Endothelial cell of umbilical vein (primary cell): ENCODE measurements at regions of chr6 and their contacts with region 1.

Region 1: DNA sequence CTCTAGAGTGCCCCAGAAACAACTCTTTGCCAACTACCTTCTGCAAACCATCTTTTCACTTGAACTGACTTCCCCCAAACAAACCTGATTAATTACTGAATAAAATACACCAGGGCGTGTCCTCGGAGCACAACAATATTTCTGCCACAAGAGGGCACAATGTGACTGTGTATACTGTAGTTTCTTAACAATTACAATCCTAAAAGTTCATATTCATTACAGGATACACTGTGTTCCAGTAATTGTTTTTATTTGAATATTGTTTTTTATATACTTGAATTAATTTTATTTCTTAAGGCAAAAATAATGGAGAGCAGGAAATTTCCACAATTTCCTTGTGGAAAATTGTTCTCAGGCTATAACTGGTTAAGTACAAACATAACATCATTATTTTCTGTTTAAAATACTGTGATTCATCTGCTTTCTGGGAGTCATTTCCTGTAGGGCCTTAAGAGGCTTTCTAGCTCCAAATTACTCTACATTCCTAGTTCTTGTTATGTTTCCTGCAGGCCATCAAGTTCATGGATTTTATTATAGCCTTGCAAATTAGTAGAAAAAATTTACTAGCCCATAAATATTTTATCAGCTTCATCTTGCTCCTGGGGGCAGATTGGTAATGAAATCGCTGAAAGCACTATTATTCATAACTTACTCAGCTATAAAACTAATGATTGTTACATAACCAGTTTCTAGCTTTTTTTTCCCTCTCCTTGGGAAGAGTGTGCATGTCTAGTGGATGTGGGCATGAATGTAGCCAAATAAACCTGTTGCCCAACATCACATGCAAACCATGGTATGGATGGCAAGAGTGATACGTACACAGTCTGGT is 51.9 kb upstream of the SLC22A16 start:
- DNase-seq: peak; percentile 91
- H3K4me3 ChIP-seq: no peak overlapping the region
- H3K27ac ChIP-seq: peak overlapping the region; percentile 54
- H3K4me1 ChIP-seq: peaks cover 27% of the 10 kb centered on the region
- H3K27me3 ChIP-seq: peaks cover 29 to 30% of the 10 kb centered on the region in 2 experiments
- CTCF ChIP-seq: peak; percentile 45 to 68
- POLR2A ChIP-seq: no peak

Region 2: DNA sequence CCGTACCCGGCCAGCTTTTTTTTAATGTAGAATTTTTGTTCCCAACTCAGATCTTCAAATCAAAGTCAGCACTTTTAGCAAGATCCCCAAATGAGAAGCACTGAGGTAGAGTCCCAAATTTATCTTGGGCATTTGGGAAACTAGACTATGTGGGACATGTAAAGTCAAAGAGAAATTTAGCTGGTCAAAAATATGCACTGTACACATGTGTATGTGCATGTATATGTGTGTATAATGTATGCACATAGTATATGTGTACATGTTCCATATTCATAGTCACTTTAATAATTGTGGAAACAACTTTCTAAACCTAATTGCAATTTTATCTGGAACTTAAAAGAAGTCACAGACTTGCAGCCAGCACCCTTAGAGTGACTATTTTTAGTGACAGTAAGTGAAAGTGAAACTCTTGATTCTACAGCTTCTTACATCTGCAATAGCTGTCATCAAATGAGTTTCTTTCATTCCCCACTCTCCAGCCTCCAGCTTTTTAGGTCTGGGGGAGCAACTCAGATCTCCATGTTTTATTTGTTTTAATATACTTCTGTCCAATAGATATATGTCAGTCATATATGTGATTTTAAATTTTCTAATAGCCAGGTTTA is 294.4 kb before region 1 on chr6:
- CTCF ChIA-PET with region 1: no interaction called
- POLR2A ChIA-PET with region 1: no interaction called
- dilution Hi-C with region 1: no loop called
- intact Hi-C with region 1: no loop called
- DNase-seq: no peak
- H3K4me3 ChIP-seq: no peak overlapping the region
- H3K27ac ChIP-seq: no peak overlapping the region
- H3K4me1 ChIP-seq: no peaks in the 10 kb centered on the region
- H3K27me3 ChIP-seq: no peaks in the 10 kb centered on the region
- CTCF ChIP-seq: no peak
- POLR2A ChIP-seq: no peak

Region 3: GRCh38 chr6:110456694-110457093 is 71.6 kb before region 1 on chr6:
- CTCF ChIA-PET with region 1: interaction called, 7 read pairs
- POLR2A ChIA-PET with region 1: no interaction called
- dilution Hi-C with region 1: no loop called
- intact Hi-C with region 1: loop called (anchors 5 kb)
- DNase-seq: no peak
- H3K4me3 ChIP-seq: no peak overlapping the region
- H3K27ac ChIP-seq: no peak overlapping the region
- H3K4me1 ChIP-seq: no peaks in the 10 kb centered on the region
- H3K27me3 ChIP-seq: peaks cover 5 to 22% of the 10 kb centered on the region in 2 experiments
- CTCF ChIP-seq: no peak
- POLR2A ChIP-seq: no peak

Region 4: GRCh38 chr6:110682460-110682853 is 154.1 kb after region 1 on chr6:
- CTCF ChIA-PET with region 1: interaction called, 14 read pairs
- POLR2A ChIA-PET with region 1: no interaction called
- dilution Hi-C with region 1: no loop called
- intact Hi-C with region 1: loop called (anchors 1 kb)
- DNase-seq: peak; percentile 84
- H3K4me3 ChIP-seq: no peak overlapping the region
- H3K27ac ChIP-seq: no peak overlapping the region
- H3K4me1 ChIP-seq: peaks cover 6% of the 10 kb centered on the region
- H3K27me3 ChIP-seq: peaks cover 0 to 1% of the 10 kb centered on the region in 2 experiments
- CTCF ChIP-seq: peak; percentile 37 to 54
- POLR2A ChIP-seq: no peak

Region 5: GRCh38 chr6:110873981-110874879 is 345.9 kb after region 1 on chr6 and contains the start of gene AMD1:
- CTCF ChIA-PET with region 1: interaction called, 14 read pairs
- POLR2A ChIA-PET with region 1: interaction called, 8 read pairs
- dilution Hi-C with region 1: no loop called
- intact Hi-C with region 1: loop called (anchors 1 kb)
- DNase-seq: peak; percentile 97
- H3K4me3 ChIP-seq: peak within 1 kb of the TSS; percentile 85 to 92 (median 90)
- H3K27ac ChIP-seq: peak within 1 kb of the TSS; percentile 60
- H3K4me1 ChIP-seq: peaks cover 34% of the 10 kb centered on the region
- H3K27me3 ChIP-seq: peaks cover 0 to 2% of the 10 kb centered on the region in 2 experiments
- CTCF ChIP-seq: no peak
- POLR2A ChIP-seq: peak; percentile 100
- total RNA-seq, gene AMD1: 44.2 and 48.2 TPM in 2 replicates

Region 6: DNA sequence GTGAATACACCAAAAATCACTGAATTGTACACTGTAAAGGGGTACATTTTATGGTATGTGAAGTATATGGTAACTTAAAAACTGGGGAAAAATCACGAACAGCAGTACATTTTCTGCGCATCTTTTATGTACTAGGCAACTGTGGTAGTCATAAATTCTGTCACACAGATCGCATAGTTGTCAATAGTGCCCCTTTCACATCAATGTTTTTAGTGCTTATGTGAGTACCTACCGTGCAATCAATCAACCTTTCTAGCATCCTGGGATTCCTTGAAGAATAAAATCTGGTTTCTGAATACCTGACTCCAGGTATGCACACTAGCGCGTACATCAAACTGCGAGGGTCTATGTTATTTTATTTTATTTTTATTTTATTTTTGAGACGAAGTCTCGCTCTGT is 452.9 kb after region 1 on chr6:
- CTCF ChIA-PET with region 1: interaction called, 5 read pairs
- POLR2A ChIA-PET with region 1: no interaction called
- dilution Hi-C with region 1: no loop called
- intact Hi-C with region 1: loop called (anchors 1 kb)
- DNase-seq: peak; percentile 33
- H3K4me3 ChIP-seq: peak overlapping the region; percentile 53 to 86 (median 75)
- H3K27ac ChIP-seq: peak overlapping the region; percentile 94
- H3K4me1 ChIP-seq: peaks cover 9% of the 10 kb centered on the region
- H3K27me3 ChIP-seq: no peaks in the 10 kb centered on the region
- CTCF ChIP-seq: no peak
- POLR2A ChIP-seq: no peak

Region 7: GRCh38 chr6:111210194-111210728 is 681.9 kb after region 1 on chr6:
- CTCF ChIA-PET with region 1: interaction called, 7 read pairs
- POLR2A ChIA-PET with region 1: no interaction called
- dilution Hi-C with region 1: no loop called
- intact Hi-C with region 1: loop called (anchors 5 kb)
- DNase-seq: peak; percentile 73
- H3K4me3 ChIP-seq: no peak overlapping the region
- H3K27ac ChIP-seq: no peak overlapping the region
- H3K4me1 ChIP-seq: no peaks in the 10 kb centered on the region
- H3K27me3 ChIP-seq: peaks cover 0 to 1% of the 10 kb centered on the region in 2 experiments
- CTCF ChIP-seq: peak; percentile 47 to 60
- POLR2A ChIP-seq: no peak